CD4-positive, alpha-beta T cell (primary cell): ENCODE measurements at regions of chr2 and their contacts with region 1.

Region 1: DNA sequence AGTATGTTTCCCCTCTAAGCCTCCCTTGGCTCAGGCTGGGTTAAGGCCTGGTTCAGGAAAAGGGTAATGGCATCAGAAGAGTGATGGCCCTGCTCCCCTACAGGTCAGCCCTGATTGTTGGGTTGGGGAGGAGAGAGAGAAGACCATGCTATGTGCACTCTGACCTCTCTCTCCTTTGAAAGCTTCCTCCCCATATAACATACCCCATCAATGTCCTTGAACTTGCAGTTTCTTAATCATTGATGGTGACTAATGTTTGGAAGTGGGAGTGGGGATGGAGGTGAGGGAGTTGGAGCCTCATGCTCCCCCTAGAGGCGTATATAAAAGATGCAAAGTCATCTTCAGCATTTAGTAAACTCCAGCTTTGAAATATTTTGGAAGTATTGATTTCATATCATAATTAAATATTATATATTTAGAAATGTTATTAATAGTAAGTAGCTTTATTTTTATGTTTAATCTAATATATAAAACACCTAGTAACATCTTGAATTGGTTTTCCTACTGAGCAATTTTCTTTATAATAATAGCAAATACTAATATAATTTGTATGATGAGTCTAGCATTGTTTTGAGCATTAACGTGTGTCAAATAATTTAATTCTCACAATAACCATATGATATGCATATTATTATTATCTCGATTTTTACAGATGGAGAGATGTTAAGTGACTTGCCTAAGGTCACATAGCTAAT is 8.8 kb downstream of the PLCL1 start:
- DNase-seq: peak in 2 of 14 experiments; percentile 54 to 58
- ATAC-seq: peak; percentile 24
- H3K4me3 ChIP-seq: no peak overlapping the region
- H3K4me3 Mint-ChIP-seq: no peak overlapping the region
- H3K27ac ChIP-seq: no peak overlapping the region
- H3K27ac Mint-ChIP-seq: no peak overlapping the region
- H3K4me1 ChIP-seq: peaks cover 7% of the 10 kb centered on the region
- H3K4me1 Mint-ChIP-seq: peaks cover 78% of the 10 kb centered on the region
- H3K27me3 ChIP-seq: no peaks in the 10 kb centered on the region
- H3K27me3 Mint-ChIP-seq: no peaks in the 10 kb centered on the region
- CTCF ChIP-seq: peak; percentile 73

Region 2: GRCh38 chr2:197828464-197829135 is 15.4 kb after region 1 on chr2:
- CTCF ChIA-PET with region 1: interaction called, 10 read pairs
- POLR2A ChIA-PET with region 1: interaction called, 4 read pairs
- intact Hi-C with region 1: no loop called
- DNase-seq: no peak
- ATAC-seq: no peak
- H3K4me3 ChIP-seq: no peak overlapping the region
- H3K4me3 Mint-ChIP-seq: no peak overlapping the region
- H3K27ac ChIP-seq: no peak overlapping the region
- H3K27ac Mint-ChIP-seq: no peak overlapping the region
- H3K4me1 ChIP-seq: no peaks in the 10 kb centered on the region
- H3K4me1 Mint-ChIP-seq: peaks cover 36% of the 10 kb centered on the region
- H3K27me3 ChIP-seq: no peaks in the 10 kb centered on the region
- H3K27me3 Mint-ChIP-seq: no peaks in the 10 kb centered on the region
- CTCF ChIP-seq: no peak